ENCODE measurements at regions of chr1 and their contacts with region 1.

Region 1: DNA sequence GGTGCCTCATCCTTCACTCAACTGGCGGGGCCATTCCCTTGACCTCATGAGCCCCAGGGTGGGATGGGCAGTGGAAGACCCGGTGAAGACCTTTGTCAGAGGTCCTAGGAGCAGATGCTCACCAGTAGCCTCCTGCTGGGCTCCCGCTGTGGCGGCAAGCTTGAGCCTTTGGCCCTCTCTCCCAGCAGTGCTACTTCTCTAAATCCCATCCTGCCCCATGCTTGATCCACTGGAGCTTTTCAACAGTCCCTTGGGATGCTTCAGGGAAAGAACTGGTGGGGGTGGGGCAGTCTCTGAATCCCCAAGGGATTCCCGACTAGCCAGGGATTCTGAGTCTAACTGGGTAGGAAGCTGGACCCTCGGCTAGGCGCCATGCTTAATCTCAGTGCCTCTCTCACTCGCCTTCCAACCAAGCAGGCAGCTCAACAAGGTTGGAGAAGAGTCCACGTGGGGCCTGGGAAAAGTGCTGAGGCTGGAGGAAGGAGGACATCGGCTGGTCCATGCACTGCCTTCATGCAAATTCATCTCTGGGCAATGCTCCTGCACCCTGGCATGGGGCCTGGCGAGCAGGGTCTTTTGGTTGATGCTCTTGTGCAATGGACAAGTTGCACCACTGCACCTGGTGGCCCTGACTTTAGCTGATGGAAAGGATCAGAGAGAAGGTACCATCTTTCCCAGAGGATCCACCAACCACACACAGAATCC is 190.3 kb downstream of the GRIK3 start:
- DNase-seq: peak in 1 of 5 donors; percentile 28
- ATAC-seq: no peak
- H3K4me3 ChIP-seq: no peak overlapping the region
- H3K27ac ChIP-seq: no peak overlapping the region
- H3K4me1 ChIP-seq: no peaks in the 10 kb centered on the region
- H3K27me3 ChIP-seq: peaks cover 0 to 60% (median 7%) of the 10 kb centered on the region in 9 donors
- CTCF ChIP-seq: no peak
- POLR2A ChIP-seq: no peak

Region 2: DNA sequence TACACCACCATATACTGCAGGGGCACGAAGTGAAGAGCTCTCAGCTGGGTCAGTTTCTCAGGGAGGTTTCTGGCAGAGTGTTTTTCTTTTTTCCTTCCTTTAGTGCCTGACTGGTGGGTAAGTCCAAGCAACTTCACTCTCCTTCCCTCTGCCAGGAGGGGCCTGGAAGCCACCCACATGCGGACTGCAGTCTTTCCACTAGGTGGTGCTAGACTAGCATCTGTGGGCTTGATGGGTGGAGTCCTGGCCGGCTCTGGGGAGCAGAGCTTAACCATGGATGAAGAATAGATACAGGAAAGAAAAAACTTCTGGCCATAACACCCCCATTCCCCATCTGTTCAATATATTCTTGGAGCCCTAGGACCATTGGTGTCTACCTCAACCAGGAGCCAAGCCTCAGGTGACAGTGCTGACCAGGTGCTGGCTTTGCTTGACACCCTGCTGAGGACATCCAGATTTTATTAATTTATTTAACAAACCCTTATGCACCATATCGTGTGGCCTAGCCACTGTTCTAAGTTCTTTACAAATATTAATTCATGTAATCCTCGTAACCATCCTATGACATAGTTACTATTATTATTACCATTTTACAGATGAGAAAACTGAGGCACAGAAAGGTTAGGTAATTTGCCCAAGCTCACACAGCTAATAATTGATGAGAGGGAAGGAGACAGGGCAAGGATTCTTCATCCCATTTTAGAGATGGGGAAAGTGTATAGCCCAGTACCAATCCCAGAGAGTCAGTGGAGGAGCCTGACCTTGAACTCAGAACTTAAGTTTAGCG is 234.6 kb before region 1 on chr1:
- intact Hi-C with region 1: loop called in 1 of 10 experiments (anchors 5 kb)
- DNase-seq: no peak
- ATAC-seq: no peak
- H3K4me3 ChIP-seq: no peak overlapping the region
- H3K27ac ChIP-seq: no peak overlapping the region
- H3K4me1 ChIP-seq: no peaks in the 10 kb centered on the region
- H3K27me3 ChIP-seq: peaks cover 0 to 32% (median 0%) of the 10 kb centered on the region in 9 donors
- CTCF ChIP-seq: peak in 11 of 12 donors; percentile 7 to 52 (median 39)
- POLR2A ChIP-seq: no peak

Region 3: GRCh38 chr1:36731226-36732014 is 112.6 kb before region 1 on chr1:
- intact Hi-C with region 1: no loop called
- DNase-seq: no peak
- ATAC-seq: no peak
- H3K4me3 ChIP-seq: no peak overlapping the region
- H3K27ac ChIP-seq: no peak overlapping the region
- H3K4me1 ChIP-seq: peaks cover 0 to 6% (median 0%) of the 10 kb centered on the region in 12 donors
- H3K27me3 ChIP-seq: peaks cover 0 to 61% (median 15%) of the 10 kb centered on the region in 9 donors
- CTCF ChIP-seq: no peak
- POLR2A ChIP-seq: no peak

Measured in heart left ventricle (tissue), 16 donors.